ENCODE measurements at regions of chr14 and their contacts with region 1.

Region 1: DNA sequence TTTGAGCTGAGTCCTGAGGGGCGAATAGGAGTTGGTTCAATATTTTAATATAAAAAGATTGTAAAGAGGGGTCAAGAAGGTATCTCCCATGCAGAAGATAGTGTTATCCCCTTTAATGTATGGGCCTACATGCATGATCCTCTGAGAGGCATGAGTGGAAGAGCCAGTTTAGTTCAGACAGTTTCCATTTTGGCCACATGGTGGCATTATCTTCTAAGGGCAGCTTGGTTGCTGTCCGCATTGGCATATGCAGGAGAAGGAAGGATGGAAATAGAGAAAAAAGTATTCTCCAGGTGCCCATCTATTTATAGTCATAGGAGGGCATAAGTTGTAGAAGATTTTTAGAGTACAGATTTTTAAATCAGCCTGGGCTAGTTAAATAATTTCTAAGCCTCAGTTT is 5.4 kb downstream of the SAMD4A start:
- DNase-seq: peak; percentile 31
- H3K4me3 Mint-ChIP-seq: no peak overlapping the region
- H3K27ac Mint-ChIP-seq: no peak overlapping the region
- H3K4me1 Mint-ChIP-seq: peaks cover 17% of the 10 kb centered on the region
- H3K27me3 Mint-ChIP-seq: peaks cover 6% of the 10 kb centered on the region

Region 2: DNA sequence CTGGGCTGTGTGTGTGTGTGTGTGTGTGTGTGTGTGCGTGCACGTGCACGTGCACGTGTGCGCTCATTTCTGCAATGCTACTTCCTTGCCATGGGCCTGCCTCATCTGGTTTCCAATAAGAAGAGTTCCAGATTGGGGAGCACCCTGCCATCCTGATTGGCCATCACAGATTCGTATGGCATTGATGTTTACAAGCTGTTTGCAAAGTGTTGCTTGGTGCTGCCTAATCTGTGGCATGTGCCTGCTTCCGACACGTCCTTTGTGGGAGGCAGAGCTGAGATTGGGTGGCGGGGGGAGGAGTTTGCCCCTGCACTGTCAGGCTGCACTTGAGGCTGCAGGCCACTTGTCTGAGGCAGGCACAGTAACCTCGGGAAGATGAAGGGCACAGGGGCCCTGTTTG is 33.9 kb after region 1 on chr14:
- CTCF ChIA-PET with region 1: no interaction called
- POLR2A ChIA-PET with region 1: no interaction called
- intact Hi-C with region 1: no loop called
- DNase-seq: no peak
- H3K4me3 Mint-ChIP-seq: no peak overlapping the region
- H3K27ac Mint-ChIP-seq: no peak overlapping the region
- H3K4me1 Mint-ChIP-seq: no peaks in the 10 kb centered on the region
- H3K27me3 Mint-ChIP-seq: no peaks in the 10 kb centered on the region

Region 3: DNA sequence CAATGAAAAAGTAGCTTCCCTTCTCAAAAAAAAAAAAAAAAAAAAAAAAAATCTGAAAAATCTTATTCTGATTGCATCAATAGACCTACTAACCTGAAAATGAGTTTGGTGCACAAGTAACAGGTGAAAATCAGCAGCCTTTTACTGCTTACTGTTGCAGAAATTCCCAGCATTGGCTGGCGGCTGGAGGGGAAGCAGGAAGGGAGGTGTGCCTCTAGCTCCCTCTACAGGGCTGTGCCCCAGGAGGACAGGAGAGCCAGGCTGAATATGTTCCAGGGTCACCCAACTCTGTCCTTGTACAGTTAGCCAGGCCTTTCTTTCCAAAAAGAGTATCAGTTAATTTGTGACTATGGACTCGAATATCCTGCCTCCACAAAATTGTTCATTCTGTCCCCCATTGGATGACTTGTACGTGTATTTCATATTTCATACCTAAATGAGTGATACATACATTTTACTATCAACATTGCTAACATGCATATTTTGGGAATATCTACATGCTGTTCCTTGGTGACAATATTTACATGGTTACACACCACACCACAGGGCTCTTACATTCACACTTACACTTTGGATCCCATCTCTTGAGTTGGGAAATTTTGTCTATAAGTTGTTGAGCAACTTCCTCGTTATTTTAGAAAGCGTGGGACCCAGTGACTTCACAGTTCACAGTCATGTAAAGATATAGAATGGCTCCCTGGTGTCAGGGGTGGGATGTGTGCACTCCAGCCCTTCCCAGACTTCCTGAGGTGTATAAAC is 119.4 kb after region 1 on chr14:
- CTCF ChIA-PET with region 1: interaction called, 31 read pairs
- POLR2A ChIA-PET with region 1: no interaction called
- intact Hi-C with region 1: loop called (anchors 1 kb)
- DNase-seq: peak; percentile 75
- H3K4me3 Mint-ChIP-seq: no peak overlapping the region
- H3K27ac Mint-ChIP-seq: no peak overlapping the region
- H3K4me1 Mint-ChIP-seq: peaks cover 15% of the 10 kb centered on the region
- H3K27me3 Mint-ChIP-seq: peaks cover 8% of the 10 kb centered on the region